Activated naive CD4-positive, alpha-beta T cell treated with anti-CD3 and anti-CD28 coated beads for 36 hours (primary cell): ENCODE measurements at regions of chr2 and their contacts with region 1.

Region 1: GRCh38 chr2:230712443-230713330 is at the start of gene CAB39:
- DNase-seq: peak; percentile 84
- H3K4me3 Mint-ChIP-seq: peak within 1 kb of the TSS; percentile 90
- H3K27ac Mint-ChIP-seq: peak within 1 kb of the TSS; percentile 94
- H3K4me1 Mint-ChIP-seq: peaks cover 40% of the 10 kb centered on the region
- H3K27me3 Mint-ChIP-seq: no peaks in the 10 kb centered on the region
- total RNA-seq, gene CAB39: 86.6 to 97.5 TPM

Region 2: DNA sequence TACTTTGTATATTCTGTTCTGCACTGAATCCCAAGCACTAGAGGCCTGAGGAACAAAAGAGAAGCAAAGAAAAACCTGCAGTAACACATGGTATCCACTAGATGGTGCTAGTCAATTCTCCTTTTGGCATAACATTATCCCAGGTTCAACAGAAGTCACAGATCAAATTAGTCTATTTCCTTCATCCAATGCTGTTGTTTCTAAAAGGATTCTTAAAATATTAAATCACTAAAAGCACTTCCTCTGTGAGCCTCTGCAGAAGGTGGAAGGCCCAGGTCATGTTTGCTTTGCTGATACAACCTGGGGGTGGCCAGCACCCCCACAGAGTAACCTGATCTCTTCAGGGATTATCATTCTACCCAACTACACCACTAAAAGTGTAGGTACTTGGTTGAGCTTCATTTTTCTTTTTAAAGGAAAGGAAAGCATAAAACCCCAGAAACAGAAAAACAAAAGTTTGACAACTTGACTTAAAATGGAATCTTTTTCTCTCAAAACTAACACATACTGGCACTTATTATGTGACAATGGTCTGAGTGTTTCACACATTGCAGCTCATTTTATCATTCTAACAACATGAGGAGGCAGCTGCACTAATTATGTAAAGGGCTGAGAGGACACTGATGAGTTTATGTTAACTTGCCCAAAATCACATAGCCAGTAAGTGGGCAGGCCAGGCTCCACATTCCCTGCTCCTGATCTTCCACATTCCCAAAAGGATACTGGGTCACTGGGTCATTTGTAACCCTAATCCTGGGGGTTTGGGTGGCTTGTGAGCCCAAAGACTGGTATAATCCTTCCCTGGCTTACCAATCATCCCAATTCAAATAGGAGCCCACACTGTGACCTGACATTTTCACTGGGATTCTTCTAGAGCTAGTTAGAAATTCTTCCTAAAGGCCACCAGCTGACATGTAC is 931.6 kb before region 1 on chr2:
- CTCF ChIA-PET with region 1: no interaction called
- intact Hi-C with region 1: loop called (anchors 1 kb)
- DNase-seq: no peak
- H3K4me3 Mint-ChIP-seq: no peak overlapping the region
- H3K27ac Mint-ChIP-seq: no peak overlapping the region
- H3K4me1 Mint-ChIP-seq: peaks cover 11% of the 10 kb centered on the region
- H3K27me3 Mint-ChIP-seq: no peaks in the 10 kb centered on the region

Region 3: DNA sequence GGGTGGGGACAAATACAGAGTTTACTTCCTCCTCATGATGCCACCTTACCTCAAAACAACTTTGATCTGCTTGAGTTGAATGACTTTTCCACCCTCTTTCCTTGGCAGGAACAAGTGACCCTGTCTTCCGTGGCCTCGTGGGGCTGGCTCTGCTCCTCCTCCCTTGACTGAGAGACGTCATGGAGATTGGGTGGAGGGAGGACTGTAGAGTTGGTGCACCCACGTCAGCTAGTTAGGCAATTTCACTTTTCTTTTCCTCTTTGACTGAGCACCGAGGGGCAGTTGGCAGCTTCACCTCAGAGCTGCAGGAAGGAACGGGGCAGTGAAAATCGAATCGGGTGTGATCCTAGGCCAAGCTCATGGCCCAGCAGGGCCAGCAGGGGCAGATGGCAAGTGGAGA is 487.2 kb before region 1 on chr2 and contains the start of gene SP140:
- CTCF ChIA-PET with region 1: no interaction called
- intact Hi-C with region 1: loop called (anchors 5 kb)
- DNase-seq: peak; percentile 87
- H3K4me3 Mint-ChIP-seq: peak within 1 kb of the TSS; percentile 81
- H3K27ac Mint-ChIP-seq: peak within 1 kb of the TSS; percentile 97
- H3K4me1 Mint-ChIP-seq: peaks cover 62% of the 10 kb centered on the region
- H3K27me3 Mint-ChIP-seq: no peaks in the 10 kb centered on the region
- total RNA-seq, gene SP140: 95.1 to 98.8 TPM

Region 4: DNA sequence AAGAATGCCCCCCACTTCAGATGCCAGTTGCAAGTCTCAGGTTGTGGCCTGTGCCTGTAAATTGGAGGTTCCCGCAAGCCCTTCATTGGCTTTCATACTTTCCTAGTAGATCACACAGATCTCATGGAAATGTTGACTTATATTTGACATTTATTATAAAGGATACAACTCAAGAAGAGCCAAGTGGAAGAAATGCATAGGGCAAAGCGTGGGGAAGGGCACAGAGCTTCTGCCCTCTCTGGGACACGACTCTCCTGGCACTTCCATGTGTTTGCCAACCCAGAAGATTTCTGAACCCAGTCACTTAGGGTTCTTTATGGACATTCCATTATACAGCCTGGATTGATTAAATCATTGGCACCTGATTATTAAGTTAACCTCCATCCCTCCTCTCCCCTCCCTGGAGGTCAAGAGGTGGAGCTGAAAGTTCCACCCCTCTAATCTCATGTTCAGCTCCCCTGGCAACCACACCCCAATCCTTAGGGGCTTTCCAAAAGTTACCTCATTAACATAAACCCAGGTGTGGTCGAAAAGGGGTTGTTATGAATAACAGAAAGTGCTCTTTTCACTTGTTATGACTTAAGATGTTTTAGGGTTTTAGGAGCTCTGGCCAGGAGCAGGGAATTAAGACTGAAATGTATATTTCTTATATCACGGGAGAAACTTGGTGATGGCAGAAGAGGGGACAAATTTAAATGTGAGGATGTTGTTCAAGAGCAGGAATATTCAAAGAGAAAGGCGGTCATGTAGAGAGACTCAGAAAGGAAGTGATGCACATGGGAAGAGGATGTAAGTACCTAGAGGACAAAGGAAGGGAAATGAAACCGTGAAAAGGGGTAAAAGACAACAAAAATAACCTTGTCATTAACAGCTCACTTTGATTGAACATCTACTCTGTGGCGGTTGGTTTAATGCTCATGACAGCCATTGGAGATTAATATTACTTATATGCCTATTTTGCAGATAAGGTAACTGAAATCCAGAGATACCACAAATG is 264.9 kb before region 1 on chr2:
- CTCF ChIA-PET with region 1: no interaction called
- intact Hi-C with region 1: loop called (anchors 5 kb)
- DNase-seq: peak; percentile 60
- H3K4me3 Mint-ChIP-seq: peak overlapping the region; percentile 44
- H3K27ac Mint-ChIP-seq: peak overlapping the region; percentile 89
- H3K4me1 Mint-ChIP-seq: peaks cover 50% of the 10 kb centered on the region
- H3K27me3 Mint-ChIP-seq: no peaks in the 10 kb centered on the region

Region 5: DNA sequence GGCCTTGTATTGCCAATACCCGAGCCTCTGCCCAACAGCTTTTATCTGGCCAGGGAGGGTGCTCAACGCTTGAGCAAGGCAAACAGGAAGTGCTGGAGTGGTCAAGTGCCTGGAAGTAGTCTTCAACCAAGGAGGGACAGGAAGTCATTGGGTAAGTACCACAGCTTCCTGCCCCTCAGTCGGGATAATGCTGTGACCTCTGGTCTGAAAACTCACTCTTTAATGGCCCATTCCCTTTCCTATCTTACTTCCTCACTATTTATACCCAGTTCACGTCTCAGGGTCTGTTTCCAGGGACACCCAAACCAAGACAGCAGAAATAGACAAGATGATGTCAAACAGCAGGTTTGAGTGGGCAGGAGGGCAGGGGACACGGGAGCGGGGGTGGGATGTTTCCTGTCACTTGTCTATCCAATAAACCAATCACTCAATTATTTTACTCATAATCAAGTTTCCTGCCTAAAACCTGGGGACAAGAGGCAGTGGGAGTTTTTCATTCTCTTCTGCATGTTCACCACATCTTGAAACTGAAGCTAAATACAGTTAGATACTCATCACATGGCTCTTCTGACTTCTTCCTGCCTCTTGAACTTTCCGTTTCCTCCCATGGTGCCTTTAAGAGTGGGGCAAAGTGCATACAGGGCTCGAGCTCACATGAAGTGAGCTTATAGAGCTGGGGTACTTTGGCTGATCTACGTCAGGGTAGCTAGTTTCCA is 69.0 kb before region 1 on chr2:
- CTCF ChIA-PET with region 1: interaction called, 4 read pairs
- intact Hi-C with region 1: loop called (anchors 1 kb)
- DNase-seq: peak; percentile 83
- H3K4me3 Mint-ChIP-seq: peak overlapping the region; percentile 47
- H3K27ac Mint-ChIP-seq: peak overlapping the region; percentile 96
- H3K4me1 Mint-ChIP-seq: peaks cover 33% of the 10 kb centered on the region
- H3K27me3 Mint-ChIP-seq: no peaks in the 10 kb centered on the region